Transverse colon (tissue), 4 donors: ENCODE measurements at regions of chr1 and their contacts with region 1.

Region 1: DNA sequence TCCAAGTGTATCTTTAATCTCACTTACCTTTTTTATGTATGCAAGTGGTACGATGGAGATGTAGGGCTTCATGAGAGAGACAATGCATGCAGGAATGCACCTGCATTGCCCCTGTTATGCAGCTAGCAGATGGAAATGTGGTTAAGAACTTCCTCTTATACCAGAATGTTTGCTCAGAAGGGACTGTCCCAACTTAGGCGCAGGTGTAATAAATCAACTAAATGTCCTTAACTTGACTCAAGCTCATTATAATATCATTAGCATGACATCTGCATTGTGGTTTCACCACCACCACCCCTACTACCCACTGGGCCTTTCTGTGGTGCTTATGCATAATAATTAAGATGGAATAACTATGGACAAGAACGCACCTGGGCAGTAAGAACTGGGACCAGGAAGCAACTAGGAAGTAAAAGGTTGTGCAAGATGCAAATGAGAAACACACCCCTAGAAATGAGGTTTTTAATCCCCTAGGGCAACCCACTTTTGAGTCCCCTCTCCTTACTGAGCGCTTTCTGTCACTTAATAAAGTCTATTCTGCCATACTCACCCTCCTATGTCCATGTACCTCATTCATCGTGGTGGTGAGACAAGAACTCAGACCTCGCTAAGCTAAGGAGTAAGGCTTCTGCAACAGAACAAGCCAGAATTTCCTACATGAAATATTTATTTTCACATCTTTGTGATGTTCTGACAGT is 1103.3 kb upstream of the B3GALT2 start:
- DNase-seq: peak; percentile 20
- H3K4me3 ChIP-seq: no peak overlapping the region
- H3K27ac ChIP-seq: no peak overlapping the region
- H3K4me1 ChIP-seq: no peaks in the 10 kb centered on the region
- H3K27me3 ChIP-seq: no peaks in the 10 kb centered on the region
- CTCF ChIP-seq: no peak
- EP300 ChIP-seq: no peak
- POLR2A ChIP-seq: no peak

Region 2: DNA sequence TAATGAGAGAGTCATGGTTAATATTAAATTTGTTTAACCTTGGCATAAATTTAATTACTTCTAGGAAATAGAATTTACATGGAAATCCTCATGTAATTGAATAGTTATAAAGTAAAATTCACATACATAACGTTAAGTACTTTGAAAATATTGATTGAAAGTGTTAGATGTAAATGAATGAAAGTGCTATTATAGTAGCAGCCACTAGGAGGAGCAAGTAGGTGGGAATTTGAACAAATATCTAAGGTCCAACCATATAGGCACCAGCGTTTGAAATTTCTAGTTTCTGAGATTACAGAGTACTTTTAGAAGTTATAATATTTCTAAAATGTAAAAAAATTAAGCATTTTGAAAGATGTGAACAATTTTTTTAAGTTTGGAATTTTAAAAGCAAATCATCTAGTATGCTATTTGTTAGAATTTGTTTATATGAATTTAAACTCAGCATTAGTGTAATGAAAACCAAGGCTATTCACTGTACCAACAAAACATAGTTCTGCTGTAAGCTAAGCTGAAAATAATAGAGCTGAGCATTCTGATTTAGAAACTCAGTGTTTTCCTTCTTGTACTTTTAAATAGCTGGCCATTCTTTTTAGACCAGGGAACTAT is 1106.6 kb before region 1 on chr1:
- in situ Hi-C with region 1: loop called in 3 of 4 experiments (anchors 5 to 25 kb)
- intact Hi-C with region 1: no loop called
- DNase-seq: no peak
- H3K4me3 ChIP-seq: peak overlapping the region in 1 of 4 donors; percentile 43
- H3K27ac ChIP-seq: peak overlapping the region in 1 of 4 donors; percentile 28
- H3K4me1 ChIP-seq: peaks cover 3 to 78% (median 30%) of the 10 kb centered on the region in 4 donors
- H3K27me3 ChIP-seq: no peaks in the 10 kb centered on the region
- CTCF ChIP-seq: peak; percentile 70 to 86 (median 79)
- EP300 ChIP-seq: no peak
- POLR2A ChIP-seq: no peak